Left colon (tissue), 2 donors: ENCODE measurements at regions of chr5 and their contacts with region 1.

Region 1: GRCh38 chr5:15003511-15003920 is 131.9 kb upstream of the ANKH start:
- DNase-seq: peak; percentile 44 to 56
- ATAC-seq: peak; percentile 83

Region 2: DNA sequence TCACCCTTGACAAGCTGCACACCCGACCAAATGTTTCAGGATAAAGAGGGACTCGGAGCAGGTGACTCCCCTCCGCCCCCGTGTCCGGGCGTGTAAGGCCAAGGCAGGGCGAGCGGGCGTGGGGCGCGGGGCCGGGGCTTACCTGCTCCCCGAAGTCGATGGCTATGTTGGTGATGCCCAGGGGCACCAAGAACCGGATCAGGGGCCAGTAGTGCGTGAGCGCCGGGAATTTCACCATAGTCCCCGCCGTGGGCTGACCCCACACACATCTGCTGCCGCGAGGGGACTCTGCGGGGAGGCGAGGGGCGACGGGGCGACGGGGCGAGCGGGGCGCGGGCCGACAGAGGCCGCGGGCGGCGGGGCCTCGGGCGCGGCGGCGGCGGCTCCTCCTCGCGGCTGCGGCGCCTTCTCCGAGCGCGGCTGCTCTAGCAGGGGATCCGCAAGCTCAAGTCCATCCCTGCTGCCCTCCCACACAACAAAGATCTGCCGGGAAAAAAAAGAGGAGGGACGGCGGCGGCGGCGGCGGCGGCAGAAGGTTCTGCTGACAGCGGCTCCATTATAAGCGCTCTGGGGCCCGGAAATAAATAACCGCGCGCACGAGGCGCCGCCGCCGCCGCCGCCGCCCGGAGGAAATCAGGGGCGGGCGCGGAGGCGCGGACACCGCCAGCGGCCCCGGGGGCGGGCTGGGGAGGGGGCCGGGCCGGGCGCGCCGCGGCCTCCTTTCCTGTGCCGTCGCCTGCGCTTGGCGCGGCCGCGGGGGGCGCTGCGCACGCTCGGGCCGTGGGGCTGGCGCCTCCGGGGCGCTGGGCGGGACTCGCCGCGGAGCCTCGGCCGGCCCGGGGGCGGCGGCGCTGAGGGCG is 132.1 kb before region 1 on chr5 and contains the start of gene ANKH:
- intact Hi-C with region 1: loop called in 1 of 2 experiments (anchors 5 kb)
- DNase-seq: peak; percentile 64 to 83
- ATAC-seq: peak; percentile 79
- total RNA-seq, gene ANKH: 98.4 to 156 TPM